Prostate gland (tissue), 2 donors: ENCODE measurements at regions of chr20 and their contacts with region 1.

Region 1: DNA sequence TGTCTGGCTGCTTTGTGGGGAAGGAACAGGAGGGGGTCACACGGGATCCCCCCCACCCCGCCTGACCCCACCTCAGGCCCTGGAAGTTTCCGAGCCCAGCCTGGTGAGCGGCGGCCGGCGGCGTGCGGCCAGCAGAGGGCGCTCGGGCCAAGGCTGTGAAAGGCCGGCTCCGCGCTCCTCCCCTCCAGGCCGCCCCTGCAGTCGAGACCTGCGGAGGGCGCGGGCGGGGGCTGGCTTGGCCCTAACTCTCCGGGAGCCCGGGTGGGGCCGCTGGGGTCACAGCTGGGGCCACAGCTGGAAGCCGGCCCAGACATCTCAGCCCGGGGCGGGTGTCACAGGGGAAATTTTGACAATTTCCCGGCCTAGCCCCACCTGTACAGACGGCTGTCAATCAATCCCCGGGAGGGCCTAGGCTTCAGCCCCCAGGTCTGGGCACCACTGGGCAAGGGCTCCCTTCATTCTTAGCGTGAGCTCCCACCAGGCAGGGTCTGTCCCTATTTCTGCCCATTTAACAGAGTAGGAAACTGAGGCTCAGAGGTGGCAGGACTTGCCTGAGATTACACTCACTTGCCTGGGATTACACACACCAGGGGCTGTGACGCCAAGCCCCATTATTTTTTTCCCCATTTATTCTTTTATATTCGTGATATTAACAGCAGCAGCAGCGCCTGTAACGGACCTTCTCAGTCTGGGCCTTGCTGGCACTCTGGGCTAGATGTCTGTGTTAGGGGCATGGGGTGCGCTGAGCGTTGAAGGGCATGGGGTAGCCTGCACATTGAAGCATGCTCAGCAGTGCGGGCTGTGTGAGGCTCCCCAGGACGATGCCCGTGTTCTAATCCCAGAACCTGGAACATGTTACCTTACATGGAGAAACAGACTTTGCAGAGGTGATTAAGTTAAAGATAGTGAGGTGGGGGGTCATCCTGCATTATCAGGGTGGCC is 23.0 kb downstream of the ZBP1 start:
- DNase-seq: peak; percentile 57
- H3K4me3 ChIP-seq: no peak overlapping the region
- H3K27ac ChIP-seq: no peak overlapping the region
- H3K4me1 ChIP-seq: no peaks in the 10 kb centered on the region
- H3K27me3 ChIP-seq: no peaks in the 10 kb centered on the region
- CTCF ChIP-seq: peak; percentile 96 to 98 (median 98)
- POLR2A ChIP-seq: no peak

Region 2: DNA sequence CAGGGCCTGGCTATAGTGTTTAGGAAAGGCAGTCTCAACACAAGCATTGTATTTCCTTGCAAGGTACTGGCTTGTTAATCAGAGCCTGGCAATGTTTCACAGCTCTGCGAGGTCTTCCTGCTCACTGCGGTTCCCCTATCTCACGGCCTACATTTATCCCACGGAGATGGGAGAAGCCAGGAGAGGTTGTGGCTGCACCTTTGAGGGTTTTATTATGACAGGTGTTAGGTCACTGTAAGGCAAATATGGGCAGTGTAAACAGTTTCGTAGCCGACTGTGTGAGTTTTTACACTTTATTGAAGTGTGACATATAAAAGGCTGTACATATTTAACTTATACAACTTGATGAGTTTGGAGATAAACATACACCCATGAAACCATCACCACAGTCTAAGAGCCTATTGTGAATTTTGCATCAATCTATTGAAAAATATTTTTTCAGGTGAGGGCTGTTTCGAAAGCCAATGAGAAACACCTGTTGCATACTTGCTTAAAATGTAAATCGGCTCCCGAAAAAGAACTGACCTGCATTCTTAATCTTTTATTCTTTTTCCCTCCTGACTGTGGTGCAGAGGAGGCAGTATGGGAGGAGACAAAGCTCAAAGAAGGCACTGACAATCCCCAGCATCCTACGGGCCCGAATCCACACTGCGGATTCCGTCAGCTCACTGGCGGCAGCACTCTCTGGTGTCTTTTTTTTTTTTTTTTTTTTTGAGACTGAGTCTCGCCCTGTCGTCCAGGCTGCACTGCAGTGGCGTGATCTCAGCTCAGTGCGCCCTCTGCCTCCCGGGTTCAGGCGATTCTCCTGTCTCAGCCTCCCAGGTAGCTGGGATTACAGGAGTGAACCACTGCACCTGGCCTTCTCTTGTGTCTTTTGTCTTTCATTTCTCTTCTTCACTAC is 213.6 kb before region 1 on chr20:
- intact Hi-C with region 1: loop called (anchors 5 kb)
- DNase-seq: no peak
- H3K4me3 ChIP-seq: no peak overlapping the region
- H3K27ac ChIP-seq: no peak overlapping the region
- H3K4me1 ChIP-seq: no peaks in the 10 kb centered on the region
- H3K27me3 ChIP-seq: no peaks in the 10 kb centered on the region
- CTCF ChIP-seq: no peak
- POLR2A ChIP-seq: no peak

Region 3: GRCh38 chr20:57514273-57514751 is 83.0 kb before region 1 on chr20:
- intact Hi-C with region 1: loop called (anchors 1 kb)
- DNase-seq: peak; percentile 82
- H3K4me3 ChIP-seq: no peak overlapping the region
- H3K27ac ChIP-seq: no peak overlapping the region
- H3K4me1 ChIP-seq: no peaks in the 10 kb centered on the region
- H3K27me3 ChIP-seq: no peaks in the 10 kb centered on the region
- CTCF ChIP-seq: peak; percentile 58 to 94 (median 84)
- POLR2A ChIP-seq: no peak

Region 4: GRCh38 chr20:57654363-57654997 is 57.2 kb after region 1 on chr20:
- intact Hi-C with region 1: loop called (anchors 5 kb)
- DNase-seq: peak; percentile 55
- H3K4me3 ChIP-seq: no peak overlapping the region
- H3K27ac ChIP-seq: peak overlapping the region; percentile 26 to 73
- H3K4me1 ChIP-seq: peaks cover 12% of the 10 kb centered on the region
- H3K27me3 ChIP-seq: no peaks in the 10 kb centered on the region
- CTCF ChIP-seq: peak; percentile 77 to 92 (median 90)
- POLR2A ChIP-seq: no peak

Region 5: GRCh38 chr20:58209652-58210397 is 612.6 kb after region 1 on chr20:
- intact Hi-C with region 1: loop called (anchors 1 kb)
- DNase-seq: peak; percentile 72
- H3K4me3 ChIP-seq: no peak overlapping the region
- H3K27ac ChIP-seq: no peak overlapping the region
- H3K4me1 ChIP-seq: no peaks in the 10 kb centered on the region
- H3K27me3 ChIP-seq: no peaks in the 10 kb centered on the region
- CTCF ChIP-seq: peak; percentile 100
- POLR2A ChIP-seq: no peak